Vagina (tissue), 2 donors: ENCODE measurements at regions of chrX and their contacts with region 1.

Region 1: GRCh38 chrX:37717708-37718107 is 32.1 kb downstream of the XK start:
- DNase-seq: no peak
- H3K4me3 ChIP-seq: no peak overlapping the region
- H3K27ac ChIP-seq: no peak overlapping the region
- H3K4me1 ChIP-seq: no peaks in the 10 kb centered on the region
- H3K27me3 ChIP-seq: no peaks in the 10 kb centered on the region
- CTCF ChIP-seq: no peak
- POLR2A ChIP-seq: no peak

Region 2: DNA sequence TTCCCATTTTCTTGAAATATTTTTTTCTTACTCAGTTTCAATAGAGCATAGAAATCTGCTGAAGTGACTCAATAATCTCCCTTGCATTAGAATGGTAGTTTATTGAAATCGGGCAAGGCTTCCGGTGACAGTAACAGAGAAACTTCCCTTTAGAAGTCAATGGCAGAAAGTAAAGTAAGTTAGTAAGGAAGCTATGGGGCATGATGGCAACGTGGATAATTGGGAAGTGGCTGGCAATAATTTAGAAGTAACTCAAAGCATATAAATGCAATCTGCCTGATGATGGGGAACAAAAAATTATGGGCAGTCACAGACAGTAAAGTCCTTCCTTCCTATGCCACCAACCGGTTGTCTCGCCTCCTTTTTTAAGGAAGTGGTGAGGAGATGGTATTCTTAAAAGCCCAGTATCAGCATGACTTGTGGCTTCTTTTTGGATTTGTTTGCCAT is 69.7 kb after region 1 on chrX:
- intact Hi-C with region 1: no loop called
- DNase-seq: no peak
- H3K4me3 ChIP-seq: no peak overlapping the region
- H3K27ac ChIP-seq: no peak overlapping the region
- H3K4me1 ChIP-seq: peaks cover 9% of the 10 kb centered on the region
- H3K27me3 ChIP-seq: no peaks in the 10 kb centered on the region
- CTCF ChIP-seq: no peak
- POLR2A ChIP-seq: no peak

Region 3: DNA sequence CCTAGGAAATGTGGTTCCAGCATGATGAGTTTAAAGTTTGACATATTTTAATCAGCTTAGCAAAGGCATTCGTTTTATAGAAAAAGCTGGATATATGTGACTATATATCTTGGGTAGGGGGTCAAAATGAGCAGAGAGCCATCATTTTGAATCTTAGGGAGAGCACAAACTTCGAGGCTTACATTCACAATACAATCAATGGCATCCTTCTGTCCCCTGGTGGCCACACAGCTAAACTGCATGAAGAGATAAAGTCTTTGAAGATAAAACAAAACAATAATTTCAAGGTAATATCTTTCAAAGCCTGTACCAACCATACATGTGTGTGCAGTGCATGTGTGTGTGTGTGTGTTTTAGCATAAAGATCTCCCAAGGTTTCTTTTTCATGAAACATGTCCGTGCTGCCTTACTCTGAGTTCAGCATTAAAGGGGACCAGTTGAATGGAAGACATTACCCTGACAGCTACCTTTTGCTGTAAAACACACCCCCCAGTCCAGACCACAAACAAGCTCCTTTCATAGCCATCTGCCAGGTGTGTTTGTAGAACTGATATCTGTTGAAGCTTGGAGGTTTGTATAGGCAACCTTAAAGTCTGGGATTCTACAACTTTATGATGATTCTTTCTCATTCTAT is 107.6 kb after region 1 on chrX:
- intact Hi-C with region 1: no loop called
- DNase-seq: no peak
- H3K4me3 ChIP-seq: no peak overlapping the region
- H3K27ac ChIP-seq: no peak overlapping the region
- H3K4me1 ChIP-seq: no peaks in the 10 kb centered on the region
- H3K27me3 ChIP-seq: no peaks in the 10 kb centered on the region
- CTCF ChIP-seq: peak; percentile 49 to 83 (median 61)
- POLR2A ChIP-seq: no peak

Region 4: DNA sequence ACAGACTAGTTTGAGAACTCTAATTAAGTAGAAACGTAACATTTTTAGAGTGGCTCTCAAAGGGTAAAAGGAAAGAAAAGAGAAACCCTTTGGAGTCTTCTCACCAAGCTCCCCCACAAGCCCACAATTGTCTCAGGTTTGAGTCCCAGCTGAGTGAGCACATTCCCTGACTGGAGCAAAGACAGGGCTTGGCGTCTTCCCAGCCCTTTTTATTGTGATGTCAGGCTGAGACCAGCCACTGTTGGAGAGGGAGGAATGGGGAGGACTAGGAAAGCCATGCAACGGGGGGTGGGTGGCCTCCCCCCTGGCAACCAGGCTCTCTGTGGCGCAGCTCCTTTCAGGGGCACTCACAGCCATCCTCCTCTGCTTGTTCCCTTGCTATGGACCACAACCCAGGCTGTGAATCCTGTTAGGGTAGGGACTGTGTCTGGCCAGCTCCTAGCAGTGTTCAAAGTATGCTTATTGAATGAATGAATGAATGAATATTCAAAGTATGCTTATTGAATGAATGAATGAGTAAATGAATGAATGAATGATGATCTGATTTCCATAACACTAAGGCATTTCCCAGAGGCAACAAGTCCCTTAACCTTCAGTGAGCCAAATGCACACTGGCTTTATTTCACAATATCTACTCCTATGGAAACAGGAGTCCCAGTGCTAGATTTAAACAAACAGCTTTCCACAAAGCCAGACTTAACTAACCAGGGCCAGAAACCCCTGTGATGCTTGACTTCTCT is 1496.8 kb after region 1 on chrX:
- intact Hi-C with region 1: loop called (anchors 5 kb)
- DNase-seq: no peak
- H3K4me3 ChIP-seq: no peak overlapping the region
- H3K27ac ChIP-seq: no peak overlapping the region
- H3K4me1 ChIP-seq: no peaks in the 10 kb centered on the region
- H3K27me3 ChIP-seq: no peaks in the 10 kb centered on the region
- CTCF ChIP-seq: no peak
- POLR2A ChIP-seq: no peak